Cardiac septum (tissue), 1 donor: ENCODE measurements at regions of chr5 and their contacts with region 1.

Region 1: DNA sequence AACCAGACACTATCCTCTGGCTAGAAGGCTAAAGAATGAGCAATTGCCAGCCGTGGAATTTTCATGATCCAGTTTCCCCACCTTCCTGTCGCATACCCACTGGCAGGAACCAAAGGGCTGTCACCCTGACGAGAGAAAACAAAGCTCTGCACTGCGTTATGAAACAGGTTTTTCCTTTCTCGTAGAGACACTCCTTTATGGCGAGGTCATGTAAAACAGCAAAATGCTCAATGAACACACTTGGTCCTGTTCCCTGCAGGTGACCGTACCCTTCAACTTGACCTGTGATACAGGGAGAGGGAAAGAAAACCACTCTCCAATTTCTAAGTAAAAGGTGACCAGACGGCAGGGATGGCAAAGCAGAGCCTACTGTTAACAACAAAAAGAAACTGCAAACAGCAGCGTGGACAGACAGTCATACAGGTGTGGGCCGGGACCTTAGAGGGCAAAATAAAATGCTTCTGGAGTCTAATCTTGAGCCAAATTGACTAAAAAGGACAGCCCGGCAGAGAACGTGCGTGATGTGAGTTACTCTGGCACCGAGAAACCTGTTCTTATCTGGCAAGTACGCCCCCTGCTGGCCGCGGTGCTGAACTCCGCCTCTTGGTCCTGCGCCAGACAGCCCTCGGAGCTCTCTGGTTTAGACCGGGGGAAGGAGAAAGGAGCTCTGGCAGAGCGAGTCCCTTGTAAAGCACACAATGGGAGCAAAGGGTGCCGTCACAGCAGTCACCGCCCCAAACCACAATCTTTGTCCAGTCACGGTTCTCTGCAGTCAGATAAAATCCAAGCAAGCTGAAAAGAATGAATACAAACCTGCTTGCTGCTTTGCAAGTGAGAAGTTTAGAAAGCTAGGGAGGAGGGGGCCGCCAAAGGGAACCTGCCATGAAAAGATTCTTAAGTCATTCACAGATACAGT is 98.9 kb downstream of the EFNA5 start:
- DNase-seq: peak; percentile 96

Region 2: GRCh38 chr5:107129051-107129450 is 442.8 kb before region 1 on chr5:
- intact Hi-C with region 1: loop called (anchors 10 kb)
- DNase-seq: no peak

Region 3: GRCh38 chr5:107217721-107218130 is 354.2 kb before region 1 on chr5:
- intact Hi-C with region 1: loop called (anchors 5 kb)
- DNase-seq: peak; percentile 87

Region 4: GRCh38 chr5:107381189-107381856 is 190.6 kb before region 1 on chr5:
- intact Hi-C with region 1: loop called (anchors 5 kb)
- DNase-seq: no peak